Endothelial cell of umbilical vein (primary cell): ENCODE measurements at regions of chr6 and their contacts with region 1.

Region 1: GRCh38 chr6:112087136-112087911 is at the starts of genes FAM229B and TUBE1:
- DNase-seq: peak; percentile 97
- H3K4me3 ChIP-seq: peak within 1 kb of the TSS; percentile 78 to 97 (median 78)
- H3K27ac ChIP-seq: peak within 1 kb of the TSS; percentile 49
- H3K4me1 ChIP-seq: peaks cover 8% of the 10 kb centered on the region
- H3K27me3 ChIP-seq: no peaks in the 10 kb centered on the region
- CTCF ChIP-seq: no peak
- POLR2A ChIP-seq: peak; percentile 90
- total RNA-seq, gene FAM229B: 10.1 and 10.6 TPM in 2 replicates
- total RNA-seq, gene TUBE1: 14.0 and 15.8 TPM in 2 replicates

Region 2: DNA sequence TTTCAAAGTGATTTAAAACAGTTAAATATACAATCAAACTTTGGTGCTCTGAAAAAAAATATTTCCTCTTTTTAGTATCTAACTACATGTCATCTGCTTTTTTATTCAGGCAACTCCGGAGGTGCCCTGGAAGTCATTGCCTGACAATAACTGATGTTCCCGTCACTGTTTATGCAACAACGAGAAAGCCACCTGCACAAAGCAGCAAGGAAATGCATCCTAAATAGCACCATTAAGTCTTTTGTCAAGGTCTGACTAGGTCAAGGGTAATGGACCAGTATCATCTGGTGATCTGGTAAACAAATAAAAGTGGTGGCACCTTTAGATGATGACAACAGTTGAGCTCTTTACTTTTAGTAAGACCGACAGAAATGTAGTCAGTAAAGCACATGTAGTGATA is 13.2 kb after region 1 on chr6:
- CTCF ChIA-PET with region 1: interaction called, 12 read pairs
- POLR2A ChIA-PET with region 1: no interaction called
- dilution Hi-C with region 1: no loop called
- intact Hi-C with region 1: no loop called
- DNase-seq: no peak
- H3K4me3 ChIP-seq: no peak overlapping the region
- H3K27ac ChIP-seq: peak overlapping the region; percentile 23
- H3K4me1 ChIP-seq: peaks cover 34% of the 10 kb centered on the region
- H3K27me3 ChIP-seq: no peaks in the 10 kb centered on the region
- CTCF ChIP-seq: no peak
- POLR2A ChIP-seq: no peak

Region 3: DNA sequence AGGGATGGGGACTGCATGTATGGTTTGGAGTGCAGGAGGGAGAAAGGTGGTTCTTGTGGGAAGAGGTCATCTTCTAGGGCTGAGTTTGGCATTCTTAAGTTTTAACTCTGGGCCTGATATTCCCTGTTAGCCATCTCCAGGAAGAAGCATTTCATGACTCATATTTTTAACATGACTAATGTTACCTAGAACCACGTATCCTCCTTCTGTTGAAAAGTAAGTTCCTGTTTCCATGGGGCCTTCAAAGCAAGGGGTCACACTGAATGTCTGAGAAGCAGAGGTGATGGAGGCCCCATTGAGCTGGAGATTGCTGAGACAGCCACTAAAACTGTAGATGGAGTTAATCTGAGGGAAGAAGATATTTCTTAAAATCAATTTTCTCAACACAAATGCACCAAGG is 30.2 kb after region 1 on chr6:
- CTCF ChIA-PET with region 1: no interaction called
- POLR2A ChIA-PET with region 1: no interaction called
- dilution Hi-C with region 1: no loop called
- intact Hi-C with region 1: no loop called
- DNase-seq: peak; percentile 38
- H3K4me3 ChIP-seq: no peak overlapping the region
- H3K27ac ChIP-seq: peak overlapping the region; percentile 40
- H3K4me1 ChIP-seq: peaks cover 12% of the 10 kb centered on the region
- H3K27me3 ChIP-seq: no peaks in the 10 kb centered on the region
- CTCF ChIP-seq: no peak
- POLR2A ChIP-seq: no peak

Region 4: DNA sequence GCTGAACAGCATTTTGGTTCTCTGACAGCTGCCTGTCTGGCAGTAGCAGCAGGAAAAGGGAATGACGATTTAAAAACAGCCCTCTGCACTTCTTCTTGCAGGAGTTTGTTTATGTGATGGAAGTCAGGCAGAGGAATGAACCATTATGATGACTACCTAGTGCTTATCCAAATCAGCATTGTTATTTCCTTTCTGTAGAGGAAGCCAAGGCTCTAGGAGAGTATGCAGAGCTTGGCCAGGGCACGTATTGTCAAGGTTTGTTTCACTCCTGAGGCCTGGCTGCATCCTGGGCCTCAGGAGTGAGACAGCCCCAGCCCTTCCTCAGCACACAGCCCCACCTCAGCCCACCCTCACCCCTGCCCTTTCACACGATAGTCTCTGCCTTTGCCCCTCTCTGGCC is 68.6 kb after region 1 on chr6:
- CTCF ChIA-PET with region 1: no interaction called
- POLR2A ChIA-PET with region 1: no interaction called
- dilution Hi-C with region 1: no loop called
- intact Hi-C with region 1: no loop called
- DNase-seq: peak; percentile 85
- H3K4me3 ChIP-seq: no peak overlapping the region
- H3K27ac ChIP-seq: peak overlapping the region; percentile 72
- H3K4me1 ChIP-seq: peaks cover 44% of the 10 kb centered on the region
- H3K27me3 ChIP-seq: no peaks in the 10 kb centered on the region
- CTCF ChIP-seq: no peak
- POLR2A ChIP-seq: no peak

Region 5: DNA sequence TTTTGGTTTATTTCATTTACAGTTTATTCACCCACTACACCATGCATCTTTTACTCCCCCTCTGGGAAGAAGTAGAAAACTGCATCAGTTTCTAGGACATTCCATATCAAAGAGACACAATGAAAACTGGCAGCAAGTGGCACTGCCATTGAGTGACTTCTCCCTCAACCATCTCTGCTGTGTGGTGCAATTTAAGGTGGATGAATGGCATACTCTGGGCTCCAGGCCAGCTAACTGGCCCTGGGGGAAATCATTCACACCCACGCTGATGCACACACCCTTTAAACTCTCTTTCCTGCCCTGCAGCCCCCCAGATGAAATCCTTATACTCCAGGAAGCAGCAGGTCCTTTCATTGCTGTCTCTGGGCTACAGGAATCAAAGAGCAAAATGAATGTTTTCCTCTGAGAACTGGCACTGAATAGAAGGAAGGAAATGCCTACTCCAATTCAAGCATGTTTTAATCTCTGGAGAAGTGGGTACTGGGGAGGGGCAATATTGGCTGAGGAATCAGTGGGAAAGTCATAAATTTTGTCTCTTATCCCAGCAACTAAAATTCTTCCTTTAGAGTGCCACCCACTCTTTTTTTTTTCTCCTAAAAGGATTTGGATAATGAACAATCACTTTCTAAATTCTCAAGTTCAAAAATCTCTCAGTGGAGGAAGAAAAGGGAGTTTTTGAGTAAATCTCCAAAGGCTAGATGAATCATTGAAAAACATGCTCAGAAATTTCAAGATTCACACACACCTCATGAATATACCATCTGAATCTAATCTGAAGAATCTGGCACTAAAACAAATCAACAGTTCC is 243.0 kb after region 1 on chr6:
- CTCF ChIA-PET with region 1: no interaction called
- POLR2A ChIA-PET with region 1: no interaction called
- dilution Hi-C with region 1: no loop called
- intact Hi-C with region 1: loop called (anchors 1 kb)
- DNase-seq: peak; percentile 79
- H3K4me3 ChIP-seq: no peak overlapping the region
- H3K27ac ChIP-seq: no peak overlapping the region
- H3K4me1 ChIP-seq: peaks cover 16% of the 10 kb centered on the region
- H3K27me3 ChIP-seq: no peaks in the 10 kb centered on the region
- CTCF ChIP-seq: peak in 1 of 2 donors; percentile 10
- POLR2A ChIP-seq: no peak

Region 6: GRCh38 chr6:112372226-112372806 is 285.0 kb after region 1 on chr6:
- CTCF ChIA-PET with region 1: no interaction called
- POLR2A ChIA-PET with region 1: no interaction called
- dilution Hi-C with region 1: no loop called
- intact Hi-C with region 1: loop called (anchors 5 kb)
- DNase-seq: peak; percentile 49
- H3K4me3 ChIP-seq: no peak overlapping the region
- H3K27ac ChIP-seq: no peak overlapping the region
- H3K4me1 ChIP-seq: no peaks in the 10 kb centered on the region
- H3K27me3 ChIP-seq: peaks cover 22 to 23% of the 10 kb centered on the region in 2 experiments
- CTCF ChIP-seq: peak; percentile 32 to 36
- POLR2A ChIP-seq: no peak